Right cardiac atrium (tissue), 5 donors: ENCODE measurements at regions of chr5 and their contacts with region 1.

Region 1: GRCh38 chr5:96336351-96336985 is 96.6 kb downstream of the PCSK1 start:
- DNase-seq: peak in 2 of 3 donors; percentile 36 to 65
- ATAC-seq: peak; percentile 82
- H3K4me3 ChIP-seq: no peak overlapping the region
- H3K27ac ChIP-seq: no peak overlapping the region
- H3K4me1 ChIP-seq: peaks cover 2% of the 10 kb centered on the region
- H3K27me3 ChIP-seq: no peaks in the 10 kb centered on the region

Region 2: GRCh38 chr5:95858661-95859326 is 477.7 kb before region 1 on chr5:
- intact Hi-C with region 1: loop called (anchors 5 kb)
- DNase-seq: peak; percentile 93 to 96 (median 93)
- ATAC-seq: peak; percentile 77 to 78
- H3K4me3 ChIP-seq: no peak overlapping the region
- H3K27ac ChIP-seq: peak overlapping the region; percentile 90
- H3K4me1 ChIP-seq: peaks cover 9% of the 10 kb centered on the region
- H3K27me3 ChIP-seq: no peaks in the 10 kb centered on the region

Region 3: DNA sequence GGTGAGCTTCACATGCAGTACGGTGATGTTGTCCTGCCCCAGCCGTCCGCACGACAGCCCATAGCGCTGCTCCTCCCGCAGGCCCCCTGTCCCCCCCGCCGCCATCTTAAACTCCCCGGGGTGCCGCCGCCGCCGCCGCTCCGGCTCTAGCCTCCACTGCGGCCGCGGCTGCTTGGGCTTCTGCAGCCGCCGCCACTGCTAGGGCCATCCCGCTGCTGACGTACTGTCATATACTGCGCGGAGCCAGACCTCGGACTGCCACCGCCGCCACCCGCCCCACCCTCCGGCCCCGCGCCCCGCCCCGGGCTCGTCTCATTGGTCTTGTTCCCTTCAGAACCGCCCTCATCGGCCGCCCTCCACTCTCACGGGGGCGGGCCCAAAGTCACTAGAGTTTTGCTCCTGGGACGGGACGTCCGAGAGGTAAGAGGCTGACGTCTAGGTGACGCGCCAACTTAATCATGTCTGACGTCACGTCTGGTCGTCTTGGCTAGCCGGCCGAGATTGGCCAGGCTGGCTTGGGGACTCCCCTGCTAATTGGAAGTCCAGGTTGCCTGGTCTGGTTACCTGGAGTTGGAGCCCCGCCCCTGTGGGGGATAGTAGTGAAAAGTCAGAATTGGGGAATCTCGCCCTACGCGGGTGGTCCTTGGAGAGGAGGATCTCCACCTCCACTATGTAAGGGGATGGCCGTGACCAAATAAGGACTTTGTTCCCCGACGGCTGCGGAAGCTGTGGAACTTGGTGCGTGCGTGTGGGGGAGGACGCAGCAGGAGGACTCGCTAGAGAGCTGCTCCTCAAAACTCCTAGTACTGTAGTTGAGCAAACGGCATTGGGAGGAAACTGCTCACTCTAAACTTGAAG is 374.6 kb before region 1 on chr5 and contains the start of gene ELL2:
- intact Hi-C with region 1: loop called (anchors 5 to 10 kb)
- DNase-seq: peak; percentile 99
- ATAC-seq: peak; percentile 95 to 96
- H3K4me3 ChIP-seq: peak within 1 kb of the TSS; percentile 88
- H3K27ac ChIP-seq: peak within 1 kb of the TSS; percentile 99
- H3K4me1 ChIP-seq: peaks cover 8% of the 10 kb centered on the region
- H3K27me3 ChIP-seq: no peaks in the 10 kb centered on the region
- total RNA-seq, gene ELL2: 31.3 to 75.9 (median 33.1) TPM

Region 4: DNA sequence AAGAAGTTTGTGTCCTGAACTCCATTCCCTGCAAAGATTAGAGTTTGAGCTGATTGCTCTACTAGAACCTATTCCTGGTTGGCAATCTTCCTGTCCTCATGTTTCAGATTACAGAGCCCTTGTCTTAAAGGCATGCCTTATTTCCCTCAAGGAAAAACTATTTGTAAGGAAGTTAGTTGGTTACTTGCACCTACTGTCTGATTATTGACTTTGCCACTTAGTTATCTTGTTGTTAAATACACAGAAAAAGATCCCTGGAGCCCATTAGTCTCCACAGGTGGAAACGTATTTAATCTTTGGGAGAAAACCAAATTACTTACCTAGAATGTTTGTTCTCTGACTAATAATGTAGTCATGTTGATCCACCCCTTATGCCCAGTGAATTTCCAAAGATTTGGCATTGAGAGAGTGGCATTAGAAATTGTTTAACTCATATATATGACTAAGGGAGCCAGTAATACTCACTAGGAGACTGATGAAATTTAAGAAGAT is 242.5 kb before region 1 on chr5:
- intact Hi-C with region 1: no loop called
- DNase-seq: no peak
- ATAC-seq: no peak
- H3K4me3 ChIP-seq: no peak overlapping the region
- H3K27ac ChIP-seq: no peak overlapping the region
- H3K4me1 ChIP-seq: no peaks in the 10 kb centered on the region
- H3K27me3 ChIP-seq: no peaks in the 10 kb centered on the region

Region 5: GRCh38 chr5:96247097-96247701 is 89.3 kb before region 1 on chr5:
- intact Hi-C with region 1: loop called in 1 of 4 experiments (anchors 10 kb)
- DNase-seq: peak in 2 of 3 donors; percentile 26 to 47
- ATAC-seq: peak; percentile 93 to 95
- H3K4me3 ChIP-seq: no peak overlapping the region
- H3K27ac ChIP-seq: peak overlapping the region; percentile 88
- H3K4me1 ChIP-seq: peaks cover 2% of the 10 kb centered on the region
- H3K27me3 ChIP-seq: no peaks in the 10 kb centered on the region

Region 6: DNA sequence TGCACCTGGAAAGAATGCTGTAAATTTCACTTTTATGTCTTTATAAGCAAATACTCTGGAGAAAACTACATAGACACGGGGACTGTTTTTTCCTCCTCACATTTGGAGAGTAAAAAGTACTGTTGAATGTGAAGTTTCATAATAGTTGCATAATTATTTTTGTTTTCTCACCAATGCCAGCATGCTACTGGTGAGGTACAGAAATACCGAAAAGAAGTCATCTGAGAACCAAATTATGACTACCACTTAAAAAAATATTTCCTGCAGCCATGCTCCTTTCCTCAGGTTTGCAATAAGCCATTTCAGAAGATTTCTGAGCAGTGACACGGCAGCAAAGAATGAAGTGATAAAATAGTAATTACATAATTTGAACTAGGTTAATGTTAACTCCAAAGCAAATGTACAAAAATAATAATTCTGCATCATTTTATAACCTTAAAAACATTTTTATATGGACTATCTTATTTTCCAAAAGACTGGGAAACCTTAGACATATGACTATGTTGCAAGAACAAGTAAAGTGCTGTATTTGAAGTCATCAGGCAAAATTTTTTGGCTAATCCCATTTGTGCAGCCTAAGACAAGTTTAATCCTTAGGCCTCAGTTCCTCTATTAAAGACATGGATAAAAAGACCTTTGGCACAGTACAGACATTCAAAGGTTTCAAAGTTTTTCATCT is 48.2 kb before region 1 on chr5:
- intact Hi-C with region 1: no loop called
- DNase-seq: no peak
- ATAC-seq: no peak
- H3K4me3 ChIP-seq: no peak overlapping the region
- H3K27ac ChIP-seq: no peak overlapping the region
- H3K4me1 ChIP-seq: no peaks in the 10 kb centered on the region
- H3K27me3 ChIP-seq: no peaks in the 10 kb centered on the region